Posterior vena cava (tissue), 2 donors: ENCODE measurements at regions of chr4 and their contacts with region 1.

Region 1: GRCh38 chr4:169428376-169428775 is 157.6 kb upstream of the SH3RF1 start:
- DNase-seq: no peak

Region 2: GRCh38 chr4:169458575-169458974 is 30.2 kb after region 1 on chr4:
- intact Hi-C with region 1: loop called in 1 of 2 experiments (anchors 2 kb)
- DNase-seq: no peak

Region 3: DNA sequence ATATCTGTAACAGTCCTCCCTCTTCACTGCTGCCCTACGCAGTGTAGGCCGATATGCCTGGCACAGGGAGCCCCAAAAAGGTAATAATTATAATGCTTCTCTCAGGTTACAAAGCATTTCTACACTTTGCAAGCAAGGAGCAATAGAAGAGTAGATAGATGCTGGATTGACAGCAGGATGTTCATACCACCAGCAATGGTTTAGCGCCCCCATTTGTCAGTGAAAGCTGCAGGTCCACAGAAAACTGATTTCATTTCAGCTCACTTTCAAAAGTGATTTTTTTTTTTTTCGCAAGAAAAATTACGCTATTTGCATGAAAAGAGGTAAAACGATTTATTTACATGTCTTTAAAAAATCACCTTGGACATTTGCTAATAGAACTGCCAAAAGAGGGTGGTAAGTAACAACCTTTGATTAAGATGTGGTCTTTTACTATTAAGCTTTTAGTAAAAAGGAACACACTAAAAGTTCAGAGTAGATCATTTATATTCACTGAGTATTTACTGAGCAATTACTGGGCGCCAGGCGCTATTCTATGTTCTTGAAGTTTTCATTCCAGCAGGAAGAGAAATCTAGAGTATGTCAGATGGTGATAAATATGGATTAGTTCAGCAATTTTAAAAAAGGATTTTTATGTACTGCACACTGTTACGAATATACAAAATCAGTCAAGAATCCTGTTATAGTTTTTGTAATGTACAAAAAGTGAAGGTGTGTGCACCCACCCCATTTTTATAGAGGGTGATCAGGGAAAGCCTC is 295.0 kb after region 1 on chr4:
- intact Hi-C with region 1: no loop called
- DNase-seq: no peak